Astrocyte of the cerebellum (primary cell): ENCODE measurements at regions of chr16 and their contacts with region 1.

Region 1: DNA sequence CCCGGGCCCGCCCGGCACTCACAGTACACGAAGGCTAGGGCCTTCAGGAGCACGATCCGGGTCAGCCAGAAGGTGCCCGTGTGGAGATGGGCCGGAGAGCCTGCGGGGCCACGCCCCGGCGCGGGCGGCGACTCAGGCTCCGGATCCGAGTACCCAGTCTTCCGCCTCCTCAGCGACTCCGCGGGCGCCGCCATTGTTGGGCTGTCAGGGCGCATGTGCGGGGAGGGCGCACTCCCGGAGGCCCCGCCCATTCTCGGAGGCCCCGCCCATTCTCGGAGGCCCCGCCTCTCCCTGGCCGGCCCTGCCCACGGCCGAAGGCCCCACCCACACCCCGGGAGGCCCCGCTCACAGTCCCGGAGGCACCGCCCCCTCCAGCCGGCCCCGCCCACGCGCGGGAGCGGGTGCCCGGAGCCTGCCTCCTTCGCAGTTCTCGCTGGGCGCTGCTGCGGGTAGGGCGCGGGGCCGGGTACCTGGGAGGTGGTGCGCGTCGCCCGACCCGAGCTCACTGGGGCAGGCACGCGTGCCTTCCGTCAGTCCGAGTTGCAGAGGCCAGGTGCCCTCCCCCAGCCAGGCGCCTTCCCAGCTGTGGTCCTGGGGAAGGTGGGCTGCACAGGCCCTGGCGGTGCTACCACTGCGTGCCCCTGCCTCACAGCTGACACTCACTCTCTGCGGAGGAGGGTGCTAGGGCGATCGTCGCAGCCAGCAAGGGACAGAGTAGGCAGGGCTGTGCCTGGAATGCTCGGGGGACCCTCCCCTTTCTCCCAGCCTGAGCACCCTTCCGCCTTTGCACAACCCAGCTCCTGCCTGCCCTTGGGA is at the start of gene LMF1:
- DNase-seq: peak; percentile 26
- H3K4me3 ChIP-seq: peak within 1 kb of the TSS; percentile 77
- CTCF ChIP-seq: no peak

Region 2: DNA sequence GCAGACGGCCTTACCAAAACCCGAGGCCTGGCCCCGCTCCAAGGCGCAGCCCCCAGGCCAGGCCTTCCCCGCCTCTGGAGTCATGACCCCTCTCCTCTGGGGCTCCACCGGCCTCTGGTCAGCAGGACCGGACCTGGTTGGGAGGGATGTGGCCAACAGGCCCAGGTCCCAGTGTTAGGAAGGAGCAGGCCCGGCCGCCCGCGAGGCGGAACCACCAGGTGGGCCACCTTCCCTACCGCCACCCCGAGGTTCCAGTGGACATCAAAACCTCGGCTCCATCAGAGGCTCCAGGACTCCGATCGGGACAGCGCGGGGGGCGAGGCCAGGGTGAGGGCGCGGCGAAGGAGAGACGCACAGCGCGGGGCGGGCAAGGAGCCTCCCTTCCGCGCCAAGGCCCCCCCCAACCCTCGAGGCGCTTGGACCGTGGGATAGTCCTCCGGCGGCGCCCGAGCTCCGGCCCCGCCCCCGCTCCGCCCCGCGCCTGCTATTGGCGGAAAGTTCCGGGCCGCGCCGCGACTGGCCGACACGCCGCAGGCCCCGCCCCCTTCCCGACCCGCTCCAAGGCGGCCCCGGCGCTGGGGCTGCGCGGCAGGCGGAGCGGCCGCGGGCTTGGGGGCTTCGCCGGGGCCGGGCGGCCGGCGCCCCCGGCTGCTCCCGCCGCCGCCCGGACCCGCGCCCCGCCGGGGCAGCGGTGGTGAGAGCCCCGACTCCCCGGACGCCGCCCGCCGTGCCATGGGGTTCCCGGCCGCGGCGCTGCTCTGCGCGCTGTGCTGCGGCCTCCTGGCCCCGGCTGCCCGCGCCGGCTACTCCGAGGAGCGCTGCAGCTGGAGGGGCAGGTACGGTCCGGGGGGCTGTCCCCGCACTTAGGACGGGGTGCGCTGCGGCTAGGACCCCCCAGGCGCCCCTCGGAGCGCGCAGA is 256.2 kb before region 1 on chr16 and contains the start of gene METRN:
- in situ Hi-C with region 1: loop called (anchors 10 kb)
- DNase-seq: no peak
- H3K4me3 ChIP-seq: peak within 1 kb of the TSS; percentile 55
- CTCF ChIP-seq: no peak

Region 3: DNA sequence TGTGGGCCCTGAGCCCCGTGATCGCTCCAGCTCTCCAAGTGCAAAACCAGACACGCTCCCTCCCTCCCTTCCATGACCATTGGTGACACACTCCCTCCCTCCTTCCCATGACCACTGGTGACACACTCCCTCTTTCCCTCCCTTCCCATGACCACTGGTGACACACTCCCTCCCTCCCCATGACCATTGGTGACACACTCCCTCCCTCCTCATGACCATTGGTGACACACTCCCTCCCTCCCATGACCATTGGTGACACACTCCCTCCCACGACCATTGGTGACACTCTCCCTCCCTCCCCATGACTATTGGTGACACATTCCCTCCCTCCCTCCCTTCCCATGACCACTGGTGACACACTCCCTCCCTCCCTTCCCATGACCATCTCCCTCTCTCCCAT is 56.5 kb before region 1 on chr16:
- in situ Hi-C with region 1: loop called (anchors 5 kb)
- DNase-seq: no peak
- H3K4me3 ChIP-seq: no peak overlapping the region
- CTCF ChIP-seq: no peak

Region 4: DNA sequence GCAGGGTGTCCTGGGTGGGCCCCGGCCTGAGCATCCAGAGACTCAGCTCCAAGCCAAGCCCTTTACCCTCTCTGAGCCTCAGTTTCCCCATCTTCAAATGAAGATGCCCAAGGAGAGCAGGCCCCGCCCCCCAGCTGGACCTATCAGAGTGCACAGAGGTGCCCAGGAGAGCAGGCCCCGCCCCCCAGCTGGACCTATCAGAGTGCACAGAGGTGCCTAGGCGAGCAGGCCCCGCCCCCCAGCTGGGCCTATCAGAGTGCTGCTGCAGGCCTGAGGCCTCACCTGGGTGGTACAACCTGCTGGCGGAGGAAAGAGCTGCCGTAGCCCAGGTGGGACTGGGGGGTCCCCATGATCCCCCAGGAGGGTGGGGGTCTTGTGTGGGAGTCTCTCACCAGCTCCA is 98.2 kb after region 1 on chr16:
- in situ Hi-C with region 1: loop called (anchors 5 kb)
- DNase-seq: no peak
- H3K4me3 ChIP-seq: no peak overlapping the region
- CTCF ChIP-seq: no peak